ENCODE measurements at regions of chr11 and their contacts with region 1.

Region 1: DNA sequence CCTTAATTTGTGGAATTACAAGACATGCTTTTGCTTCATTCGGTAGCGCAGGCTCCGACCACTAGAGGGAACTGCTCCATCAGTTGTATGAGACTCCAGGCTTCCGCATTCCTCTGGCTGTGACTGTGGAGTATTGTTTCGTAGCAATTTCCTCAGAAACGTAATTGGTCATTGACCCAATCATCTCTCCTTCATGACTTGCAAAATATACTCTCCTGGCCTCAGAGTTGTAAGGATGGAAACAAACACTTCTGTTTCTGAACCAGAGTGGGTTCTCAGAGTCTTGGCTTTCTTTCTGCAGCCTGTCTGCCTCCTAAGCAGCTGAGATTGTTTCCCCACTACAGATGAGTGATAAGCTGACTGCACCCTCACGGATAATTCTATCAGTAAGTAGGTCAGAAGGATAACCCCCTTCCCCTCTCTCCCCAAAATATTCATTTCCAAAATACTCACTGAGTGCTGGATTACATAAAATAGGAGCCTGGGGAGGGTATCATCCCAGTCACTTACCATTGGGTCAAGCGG is 146.8 kb upstream of the ZC3H12C start:
- DNase-seq: peak; percentile 88
- ATAC-seq: peak; percentile 99

Region 2: GRCh38 chr11:110173811-110174644 is 227.6 kb after region 1 on chr11:
- intact Hi-C with region 1: loop called (anchors 10 kb)
- DNase-seq: peak; percentile 72
- ATAC-seq: peak; percentile 89

Region 3: DNA sequence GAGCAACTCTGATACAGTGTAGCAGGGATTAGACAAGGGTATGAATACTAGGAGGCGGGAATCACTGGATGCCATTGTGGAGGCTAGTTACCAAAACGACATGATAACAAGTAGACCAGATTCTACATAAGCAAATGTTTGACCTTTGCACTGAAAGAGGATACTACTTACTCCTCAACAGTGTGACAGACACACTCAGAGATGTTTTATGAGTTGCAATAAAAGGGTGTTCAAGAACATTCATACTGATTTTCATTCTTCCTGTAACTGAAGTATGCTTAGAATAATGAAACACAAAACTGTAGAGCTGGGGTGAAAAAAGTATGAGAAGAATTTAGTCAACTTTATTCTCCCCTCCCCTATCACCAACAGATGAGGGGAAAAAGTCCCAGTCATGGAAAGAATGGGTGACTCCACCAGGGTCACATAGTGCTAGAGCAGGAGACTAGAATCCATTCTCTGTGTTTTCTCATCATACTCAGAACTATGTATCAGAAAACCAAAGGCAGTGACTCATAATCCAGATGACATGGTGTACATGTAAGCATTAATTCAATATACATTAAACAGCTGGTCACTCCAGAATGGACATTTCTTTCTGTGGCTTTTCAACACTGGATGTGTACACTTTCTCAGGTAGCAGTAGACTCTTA is 733.1 kb after region 1 on chr11:
- intact Hi-C with region 1: no loop called
- DNase-seq: no peak
- ATAC-seq: no peak